ENCODE measurements at regions of chr9 and their contacts with region 1.

Region 1: DNA sequence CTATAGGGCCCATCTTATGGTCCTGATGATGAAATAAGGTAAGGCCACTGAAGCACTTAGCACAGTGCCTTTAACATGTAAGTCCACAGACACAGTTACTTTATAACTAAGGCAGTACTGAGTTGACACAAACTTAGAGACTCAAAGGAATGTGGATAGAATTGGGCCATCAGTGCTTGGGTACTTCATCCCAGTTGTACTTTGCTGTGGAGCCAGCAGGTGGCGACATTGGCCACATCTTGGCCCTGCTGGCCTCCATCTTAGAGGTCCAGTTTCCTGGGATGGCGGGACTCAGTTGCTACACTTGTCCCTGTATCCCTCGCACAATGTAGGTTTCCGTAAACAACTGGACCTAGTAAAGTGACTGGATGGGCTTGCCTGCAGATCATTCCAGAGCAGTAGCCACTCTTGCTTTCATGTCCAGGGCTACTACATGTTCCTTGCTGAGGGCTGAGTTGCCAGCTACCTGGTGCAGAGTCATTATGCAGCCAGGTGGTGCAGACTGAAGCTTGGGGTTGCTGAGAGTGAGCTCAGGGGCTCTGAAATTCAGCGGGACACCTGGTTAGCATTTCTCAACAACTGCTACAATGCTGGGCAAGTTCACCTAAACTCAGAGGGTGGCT is 10.6 kb downstream of the MTAP start:
- DNase-seq: peak; percentile 53
- H3K4me3 ChIP-seq: no peak overlapping the region
- H3K27ac ChIP-seq: peak overlapping the region in 1 of 2 donors; percentile 17
- H3K4me1 ChIP-seq: peaks cover 3% of the 10 kb centered on the region
- H3K27me3 ChIP-seq: no peaks in the 10 kb centered on the region
- CTCF ChIP-seq: peak; percentile 71 to 85 (median 79)
- POLR2A ChIP-seq: no peak

Region 2: GRCh38 chr9:21720758-21721157 is 92.3 kb before region 1 on chr9:
- intact Hi-C with region 1: no loop called
- DNase-seq: no peak
- H3K4me3 ChIP-seq: no peak overlapping the region
- H3K27ac ChIP-seq: no peak overlapping the region
- H3K4me1 ChIP-seq: no peaks in the 10 kb centered on the region
- H3K27me3 ChIP-seq: no peaks in the 10 kb centered on the region
- CTCF ChIP-seq: no peak
- POLR2A ChIP-seq: no peak

Region 3: DNA sequence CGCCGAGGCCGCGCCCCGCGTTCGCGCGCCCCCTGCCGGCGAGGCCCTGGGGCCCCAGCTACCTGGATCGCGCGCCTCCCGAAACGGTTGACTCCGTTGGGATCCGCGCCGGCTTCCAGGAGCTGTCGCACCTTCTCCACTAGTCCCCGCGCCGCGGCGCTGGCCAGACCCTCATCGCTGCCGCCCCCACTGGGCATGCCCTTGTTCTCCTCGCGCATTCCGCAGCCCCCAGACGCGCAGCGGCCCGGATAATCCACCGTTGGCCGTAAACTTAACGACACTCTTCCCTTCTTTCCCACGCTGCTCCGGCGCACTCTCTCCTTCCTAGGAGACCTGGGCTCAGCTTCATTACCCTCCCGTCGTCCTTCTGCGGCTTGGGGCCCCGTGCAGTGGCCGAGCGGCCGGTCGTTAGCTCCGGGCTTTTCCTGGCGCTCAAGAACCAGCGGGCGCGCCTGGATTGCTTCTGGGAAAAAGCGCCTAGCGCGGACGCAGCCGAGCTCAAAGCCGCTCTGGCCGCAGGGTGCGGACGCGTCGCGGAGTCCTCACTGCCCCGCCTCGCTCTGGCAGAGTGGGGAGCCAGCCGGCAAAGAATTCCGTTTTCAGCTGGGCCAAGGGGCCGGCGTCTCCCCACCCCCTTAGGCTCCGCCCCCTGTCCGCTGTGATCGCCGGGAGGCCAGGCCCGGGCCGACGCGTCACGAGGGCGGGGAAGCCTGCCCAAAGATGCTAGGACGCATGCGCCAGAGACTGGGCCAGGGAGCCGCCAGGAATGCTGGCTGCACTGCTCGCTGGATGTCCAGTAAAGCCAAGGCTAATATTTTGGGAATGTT is 195.9 kb after region 1 on chr9 and contains the start of gene CDKN2B:
- intact Hi-C with region 1: loop called (anchors 5 kb)
- DNase-seq: peak; percentile 94
- H3K4me3 ChIP-seq: peak within 1 kb of the TSS; percentile 49 to 66
- H3K27ac ChIP-seq: peak within 1 kb of the TSS; percentile 89 to 92
- H3K4me1 ChIP-seq: no peaks in the 10 kb centered on the region
- H3K27me3 ChIP-seq: peaks cover 8% of the 10 kb centered on the region
- CTCF ChIP-seq: peak; percentile 73 to 91 (median 86)
- POLR2A ChIP-seq: peak; percentile 61
- total RNA-seq, gene CDKN2B: 5.4 to 8.8 TPM

Region 4: GRCh38 chr9:22037954-22038690 is 225.1 kb after region 1 on chr9:
- intact Hi-C with region 1: loop called (anchors 10 kb)
- DNase-seq: no peak
- H3K4me3 ChIP-seq: no peak overlapping the region
- H3K27ac ChIP-seq: no peak overlapping the region
- H3K4me1 ChIP-seq: no peaks in the 10 kb centered on the region
- H3K27me3 ChIP-seq: no peaks in the 10 kb centered on the region
- CTCF ChIP-seq: peak in 3 of 4 experiments; percentile 33 to 63 (median 54)
- POLR2A ChIP-seq: no peak

Region 5: GRCh38 chr9:22119537-22120158 is 306.6 kb after region 1 on chr9:
- intact Hi-C with region 1: loop called (anchors 10 kb)
- DNase-seq: no peak
- H3K4me3 ChIP-seq: no peak overlapping the region
- H3K27ac ChIP-seq: no peak overlapping the region
- H3K4me1 ChIP-seq: no peaks in the 10 kb centered on the region
- H3K27me3 ChIP-seq: no peaks in the 10 kb centered on the region
- CTCF ChIP-seq: peak in 3 of 4 experiments; percentile 18 to 41 (median 41)
- POLR2A ChIP-seq: no peak

Region 6: DNA sequence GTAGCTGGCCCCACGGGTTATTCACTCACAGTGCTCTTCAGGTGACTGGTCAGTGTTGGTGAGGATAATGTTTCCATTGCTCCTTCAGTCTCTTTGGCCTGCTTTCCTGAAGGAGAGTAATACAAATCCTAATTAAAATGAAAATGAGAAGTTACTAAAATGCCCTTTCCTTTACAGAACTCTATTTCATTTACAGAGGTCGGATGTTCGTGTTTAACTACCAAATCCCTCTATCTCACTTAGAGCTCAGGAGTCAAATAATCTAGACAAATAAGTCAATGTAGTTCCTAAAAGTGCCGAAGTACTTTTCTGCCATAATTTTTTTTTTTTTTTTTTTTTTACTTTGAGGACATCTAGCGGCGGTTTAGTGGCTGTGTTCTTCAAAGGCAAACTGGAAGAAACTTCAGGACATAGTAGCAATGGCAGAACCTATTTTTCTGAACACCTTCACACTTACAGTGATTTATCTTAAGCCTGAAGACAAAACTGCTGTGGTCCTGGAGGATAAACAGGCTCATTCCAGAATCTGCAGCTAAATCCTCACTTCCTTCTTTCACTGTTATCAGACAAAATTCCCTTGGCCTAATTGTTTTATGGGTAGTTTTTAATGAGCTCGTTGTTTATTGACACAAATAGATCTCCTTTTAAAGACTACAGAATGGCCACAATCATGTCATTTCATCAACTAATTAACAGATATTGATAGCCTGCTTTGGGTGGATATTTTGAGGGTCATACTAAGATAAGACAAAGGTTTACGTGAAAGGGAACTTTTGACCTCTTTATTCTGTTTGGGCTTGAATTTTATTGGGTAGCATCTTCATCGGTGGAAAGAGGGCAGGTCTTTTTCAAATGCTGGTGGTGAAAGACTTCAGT is 426.0 kb after region 1 on chr9:
- intact Hi-C with region 1: loop called (anchors 2 kb)
- DNase-seq: no peak
- H3K4me3 ChIP-seq: no peak overlapping the region
- H3K27ac ChIP-seq: no peak overlapping the region
- H3K4me1 ChIP-seq: no peaks in the 10 kb centered on the region
- H3K27me3 ChIP-seq: no peaks in the 10 kb centered on the region
- CTCF ChIP-seq: peak in 2 of 4 experiments; percentile 16 to 30
- POLR2A ChIP-seq: no peak

Measured in prostate gland (tissue), 2 donors.